ENCODE measurements at regions of chr13 and their contacts with region 1.

Region 1: GRCh38 chr13:30880856-30881155 is 25.3 kb upstream of the MEDAG start:
- DNase-seq: peak; percentile 79
- H3K4me3 ChIP-seq: no peak overlapping the region
- H3K27me3 ChIP-seq: no peaks in the 10 kb centered on the region
- CTCF ChIP-seq: no peak

Region 2: DNA sequence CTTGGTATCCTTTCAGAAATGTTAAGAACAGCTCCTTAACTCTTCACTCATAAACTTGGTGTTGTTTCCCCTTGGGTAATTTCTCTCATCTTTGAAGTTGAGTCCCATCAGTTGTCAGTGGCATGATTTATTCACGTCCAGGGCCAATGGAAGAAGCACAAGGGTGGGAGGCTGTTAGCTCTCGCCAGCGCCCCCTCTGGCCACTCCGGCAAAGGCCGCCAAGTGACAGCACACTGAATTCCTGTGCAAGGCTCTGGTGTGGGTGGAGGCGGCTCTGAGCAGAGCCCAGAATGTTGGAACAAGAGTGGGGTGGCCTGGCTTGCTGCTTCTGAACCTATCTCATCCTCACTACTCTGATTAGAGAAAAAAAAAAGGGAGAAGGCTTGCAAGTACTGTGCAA is 12.2 kb after region 1 on chr13:
- CTCF ChIA-PET with region 1: interaction called, 34 read pairs
- POLR2A ChIA-PET with region 1: no interaction called
- DNase-seq: no peak
- H3K4me3 ChIP-seq: no peak overlapping the region
- H3K27me3 ChIP-seq: no peaks in the 10 kb centered on the region
- CTCF ChIP-seq: peak; percentile 70

Region 3: DNA sequence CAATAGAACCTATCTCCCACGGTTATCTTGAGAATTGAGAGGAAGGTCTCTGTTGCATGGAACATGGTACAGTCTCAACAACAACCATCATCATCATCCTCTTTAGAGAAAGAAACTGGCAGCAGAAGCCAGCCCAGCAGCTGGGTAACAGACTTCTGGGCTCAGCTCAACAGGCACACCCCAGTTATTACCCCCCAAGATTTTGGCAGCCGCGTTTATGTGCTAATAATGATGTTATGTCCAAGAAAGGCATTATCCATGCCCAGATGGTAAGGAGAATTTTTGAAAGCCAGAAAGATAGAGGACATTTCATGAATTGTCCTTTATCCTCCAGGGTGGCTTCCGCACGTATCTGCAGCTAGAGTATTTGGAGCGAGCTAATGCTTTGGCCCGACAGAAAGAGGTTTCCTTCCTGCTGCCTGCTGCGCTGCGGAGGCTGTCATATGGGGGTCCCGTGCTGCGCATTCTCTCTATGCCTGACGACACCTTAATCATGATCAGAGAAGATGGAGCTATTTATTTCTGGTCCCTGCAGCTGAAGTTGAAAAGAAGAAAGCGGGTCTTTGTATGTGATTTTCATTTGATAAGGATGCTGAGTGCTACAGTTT is 141.6 kb after region 1 on chr13:
- CTCF ChIA-PET with region 1: no interaction called
- POLR2A ChIA-PET with region 1: no interaction called
- DNase-seq: no peak
- H3K4me3 ChIP-seq: no peak overlapping the region
- H3K27me3 ChIP-seq: peaks cover 6% of the 10 kb centered on the region
- CTCF ChIP-seq: no peak

Region 4: DNA sequence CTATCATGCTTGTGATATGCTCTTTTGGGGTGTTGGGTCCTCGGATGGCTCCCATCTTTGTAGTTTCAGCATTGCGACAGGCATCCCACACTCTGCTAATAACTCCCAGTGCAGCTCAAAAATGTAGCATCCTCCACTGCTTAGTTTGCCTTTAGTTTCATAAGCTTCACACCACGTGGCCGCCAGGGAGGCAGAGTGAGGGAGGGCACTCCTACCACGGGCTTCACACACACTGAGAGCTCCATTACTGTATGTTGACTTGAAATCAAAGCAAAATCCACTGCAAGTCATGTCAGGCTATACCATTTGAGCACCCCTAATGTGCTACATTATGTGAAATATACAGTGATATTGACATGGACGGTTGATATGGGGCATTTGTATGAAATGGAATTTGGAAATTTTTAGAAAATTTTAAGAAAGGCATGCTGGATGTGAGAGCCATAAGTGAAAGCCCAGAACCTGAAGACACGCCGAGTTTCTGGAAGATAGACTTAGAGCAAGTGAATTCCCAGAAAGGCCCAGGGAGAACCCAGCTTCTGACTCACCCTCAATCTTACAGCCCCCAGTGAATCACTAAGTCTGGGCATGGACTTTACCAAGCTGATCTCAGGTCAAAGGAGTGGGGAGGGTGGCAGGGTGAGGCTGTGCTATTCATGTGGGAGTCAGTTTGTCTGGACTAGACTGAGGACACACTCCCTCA is 186.8 kb after region 1 on chr13:
- CTCF ChIA-PET with region 1: no interaction called
- POLR2A ChIA-PET with region 1: no interaction called
- DNase-seq: no peak
- H3K4me3 ChIP-seq: no peak overlapping the region
- H3K27me3 ChIP-seq: peaks cover 2% of the 10 kb centered on the region; the same call in 1 of the 2 replicates
- CTCF ChIP-seq: no peak

Measured in BJ (cell line).